ENCODE measurements at regions of chr2 and their contacts with region 1.

Region 1: DNA sequence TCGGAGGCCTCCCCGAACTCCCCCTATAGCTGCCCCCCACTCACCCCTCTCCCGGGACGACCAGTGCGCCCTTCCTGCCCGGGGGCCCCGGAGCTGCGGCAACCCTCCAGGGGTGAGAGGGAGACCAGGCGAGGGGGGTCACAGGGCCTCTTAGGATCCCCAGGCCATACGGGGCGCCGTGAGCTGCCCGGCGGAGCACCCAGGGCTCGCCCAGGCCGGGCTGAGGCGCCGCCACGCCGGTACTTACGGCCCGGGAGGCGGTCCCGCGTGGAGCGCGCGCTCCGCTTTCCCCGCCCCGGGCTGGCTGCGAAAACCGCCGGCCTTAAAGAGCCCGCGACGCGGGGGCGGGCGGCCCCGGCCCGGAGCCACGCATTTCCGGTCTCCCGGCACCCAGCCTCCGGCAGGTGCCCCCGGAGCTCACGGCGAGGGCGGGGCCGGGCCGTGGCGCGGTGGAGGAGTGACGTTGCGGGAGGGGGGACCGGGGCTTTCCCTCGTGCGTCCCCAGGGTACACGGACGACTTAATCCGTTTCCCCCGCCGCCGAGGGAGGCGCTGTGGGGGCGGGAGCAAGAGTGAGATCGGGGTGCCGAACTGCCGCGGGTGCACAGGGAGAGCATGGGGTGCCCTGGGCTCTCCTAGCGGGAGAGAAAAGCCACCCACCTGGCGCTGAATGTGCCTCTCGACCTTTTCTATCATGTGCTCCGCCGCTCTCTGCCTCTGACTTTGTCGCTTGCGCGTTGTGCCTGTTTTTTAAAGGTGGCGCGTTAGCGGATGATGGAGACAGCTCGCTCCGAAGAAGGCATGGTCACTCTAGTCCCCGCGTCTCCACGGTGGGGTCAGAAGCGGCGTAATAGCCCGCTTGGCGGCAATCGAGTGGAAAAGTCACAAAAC is at the start of gene METTL21A:
- DNase-seq: peak; percentile 93
- H3K4me3 ChIP-seq: peak within 1 kb of the TSS; percentile 73 to 98
- H3K27ac ChIP-seq: peak within 1 kb of the TSS; percentile 91 to 92
- H3K4me1 ChIP-seq: peaks cover 0 to 7% of the 10 kb centered on the region in 2 experiments; a peak in 1 of 4 replicates
- H3K27me3 ChIP-seq: no peaks in the 10 kb centered on the region
- CTCF ChIP-seq: peak; percentile 47
- EP300 ChIP-seq: no peak
- RAD21 ChIP-seq: no peak
- polyA plus RNA-seq, gene METTL21A: 18.7 and 19.4 TPM in 2 replicates

Region 2: DNA sequence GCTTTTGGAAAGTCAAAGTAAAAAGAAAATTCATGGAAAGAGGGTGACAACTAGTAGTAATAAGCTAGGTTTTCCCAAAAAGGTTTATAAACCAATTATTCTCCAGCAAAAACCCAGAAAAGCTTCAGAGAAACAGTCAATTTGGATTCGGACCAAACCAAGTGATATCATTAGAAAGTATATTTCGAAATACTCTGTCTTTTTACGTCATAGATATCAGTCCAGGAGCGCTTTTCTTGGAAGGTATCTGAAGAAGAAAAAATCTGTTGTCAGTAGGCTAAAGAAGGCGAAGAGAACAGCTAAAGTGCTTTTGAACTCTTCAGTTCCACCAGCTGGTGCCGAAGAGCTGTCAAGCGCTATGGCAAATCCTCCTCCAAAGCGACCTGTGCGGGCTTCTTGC is 1314.2 kb before region 1 on chr2:
- CTCF ChIA-PET with region 1: no interaction called
- POLR2A ChIA-PET with region 1: no interaction called
- DNase-seq: no peak
- H3K4me3 ChIP-seq: no peak overlapping the region
- H3K27ac ChIP-seq: no peak overlapping the region
- H3K4me1 ChIP-seq: no peaks in the 10 kb centered on the region
- H3K27me3 ChIP-seq: no peaks in the 10 kb centered on the region
- CTCF ChIP-seq: no peak
- EP300 ChIP-seq: no peak
- RAD21 ChIP-seq: no peak

Region 3: DNA sequence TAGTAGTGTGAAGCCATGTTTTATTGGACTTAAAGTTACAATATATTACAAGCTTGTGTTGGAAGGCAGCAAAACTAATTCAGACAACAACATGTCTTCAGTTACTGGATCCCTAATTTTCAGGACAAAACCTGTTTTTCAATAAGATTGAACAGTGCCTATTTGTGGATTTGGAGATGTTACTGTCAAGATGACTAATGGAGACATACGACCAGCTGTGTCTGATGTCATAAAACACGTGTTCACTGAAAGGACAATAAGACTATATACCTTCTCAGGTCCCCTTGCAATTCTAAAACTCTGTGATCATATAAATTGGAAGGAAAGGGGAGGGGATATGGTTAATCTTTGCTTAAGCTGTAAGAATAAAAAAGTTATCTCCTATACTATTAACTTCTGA is 21.8 kb before region 1 on chr2:
- CTCF ChIA-PET with region 1: interaction called, 10 read pairs
- POLR2A ChIA-PET with region 1: no interaction called
- DNase-seq: no peak
- H3K4me3 ChIP-seq: no peak overlapping the region
- H3K27ac ChIP-seq: no peak overlapping the region
- H3K4me1 ChIP-seq: peaks cover 2 to 15% of the 10 kb centered on the region in 2 experiments; a peak in 2 of 4 replicates
- H3K27me3 ChIP-seq: no peaks in the 10 kb centered on the region
- CTCF ChIP-seq: no peak
- EP300 ChIP-seq: no peak
- RAD21 ChIP-seq: no peak

Region 4: DNA sequence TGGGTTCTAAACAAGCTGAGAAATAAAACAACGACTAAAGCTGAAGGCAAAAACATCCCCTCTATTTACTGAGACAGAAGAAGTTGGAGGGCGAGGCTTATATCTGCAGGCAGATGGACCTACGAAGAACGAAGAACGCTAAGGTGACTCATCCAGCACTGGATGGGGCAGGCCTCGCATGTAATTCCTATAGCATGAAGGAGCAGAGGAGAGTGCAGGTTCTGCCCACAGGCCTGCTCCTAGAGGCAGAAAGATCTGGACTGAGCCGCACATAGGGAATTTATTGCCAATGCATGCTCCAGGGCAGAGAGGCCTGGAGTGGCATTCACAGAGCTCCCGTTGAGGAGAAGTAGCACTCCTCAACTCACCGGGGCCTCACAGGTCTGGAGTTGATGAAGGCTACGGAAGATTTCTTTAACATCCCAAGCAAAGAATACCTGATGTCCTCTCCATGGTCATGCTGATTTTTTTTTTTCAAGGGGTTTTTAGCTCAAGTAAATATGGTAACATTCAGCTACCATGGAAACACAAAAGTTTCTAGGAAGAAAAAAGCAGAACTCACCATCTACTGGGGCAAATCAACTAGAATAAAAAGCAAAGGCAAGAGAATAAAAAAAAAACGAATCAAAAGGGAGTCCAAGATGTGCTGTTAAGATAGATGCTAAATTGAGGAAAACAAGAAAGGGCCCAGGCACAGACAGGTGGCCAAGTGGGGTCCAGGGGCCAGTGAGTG is 10.4 kb after region 1 on chr2:
- CTCF ChIA-PET with region 1: interaction called, 18 read pairs
- POLR2A ChIA-PET with region 1: interaction called, 6 read pairs
- DNase-seq: no peak
- H3K4me3 ChIP-seq: no peak overlapping the region
- H3K27ac ChIP-seq: no peak overlapping the region
- H3K4me1 ChIP-seq: no peaks in the 10 kb centered on the region
- H3K27me3 ChIP-seq: no peaks in the 10 kb centered on the region
- CTCF ChIP-seq: no peak
- EP300 ChIP-seq: no peak
- RAD21 ChIP-seq: no peak

Region 5: DNA sequence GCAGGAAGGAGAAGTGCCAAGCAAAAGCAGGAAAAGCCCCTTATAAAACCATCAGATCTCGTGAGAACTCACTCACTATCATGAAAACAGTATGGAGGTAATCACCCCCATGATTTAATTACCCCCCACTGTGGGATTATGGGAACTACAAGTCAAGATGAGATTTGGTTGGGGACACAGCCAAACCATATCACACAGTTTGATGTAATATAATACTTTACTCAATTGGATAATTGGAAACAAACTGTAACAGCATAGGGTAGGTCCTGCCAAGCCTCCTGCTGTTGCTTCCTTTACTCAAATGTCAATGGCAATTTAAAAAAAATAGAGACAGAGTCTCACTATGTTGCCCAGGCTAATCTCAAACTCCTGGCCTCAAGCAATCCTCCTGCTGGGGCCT is 15.4 kb after region 1 on chr2:
- CTCF ChIA-PET with region 1: interaction called, 18 read pairs
- POLR2A ChIA-PET with region 1: interaction called, 6 read pairs
- DNase-seq: no peak
- H3K4me3 ChIP-seq: no peak overlapping the region
- H3K27ac ChIP-seq: no peak overlapping the region
- H3K4me1 ChIP-seq: no peaks in the 10 kb centered on the region
- H3K27me3 ChIP-seq: no peaks in the 10 kb centered on the region
- CTCF ChIP-seq: no peak
- EP300 ChIP-seq: no peak
- RAD21 ChIP-seq: no peak

Measured in SK-N-SH (cell line).